Activated B cell treated with CpG ODN at 0.5 μM for 24 hours (primary cell): ENCODE measurements at regions of chr6 and their contacts with region 1.

Region 1: DNA sequence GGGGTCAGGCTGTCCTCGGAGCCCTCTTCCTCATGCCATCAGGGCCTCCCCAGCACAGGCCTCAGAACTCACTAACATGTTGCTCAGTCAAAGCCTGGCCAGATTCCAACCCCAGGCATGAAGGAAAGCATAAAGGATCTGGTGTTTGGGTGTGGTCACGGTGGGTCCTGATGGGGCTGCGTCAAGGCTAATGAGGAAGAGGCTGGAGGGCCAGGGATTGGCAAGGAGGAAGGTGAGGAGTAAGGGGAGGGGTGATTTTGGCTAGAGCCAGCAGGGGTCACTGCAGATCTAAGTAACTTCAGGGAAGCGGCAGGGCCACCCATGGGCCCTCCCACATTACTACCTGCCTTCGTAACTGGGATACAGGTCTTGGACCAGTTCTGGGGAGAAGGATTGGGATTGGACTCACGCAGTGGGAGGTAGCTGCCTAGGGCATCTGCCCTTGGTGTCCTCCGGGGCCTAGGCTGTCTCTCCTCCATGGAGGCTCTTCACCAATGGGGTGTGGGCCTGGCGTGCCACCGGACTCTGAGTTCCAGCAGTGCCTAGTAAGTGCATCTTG is 36.2 kb upstream of the MRPS18A start:
- DNase-seq: peak; percentile 46
- ATAC-seq: peak; percentile 74
- H3K4me3 Mint-ChIP-seq: no peak overlapping the region
- H3K27ac Mint-ChIP-seq: no peak overlapping the region
- H3K4me1 Mint-ChIP-seq: peaks cover 27% of the 10 kb centered on the region
- H3K27me3 Mint-ChIP-seq: peaks cover 5% of the 10 kb centered on the region
- CTCF ChIP-seq: peak; percentile 36

Region 2: DNA sequence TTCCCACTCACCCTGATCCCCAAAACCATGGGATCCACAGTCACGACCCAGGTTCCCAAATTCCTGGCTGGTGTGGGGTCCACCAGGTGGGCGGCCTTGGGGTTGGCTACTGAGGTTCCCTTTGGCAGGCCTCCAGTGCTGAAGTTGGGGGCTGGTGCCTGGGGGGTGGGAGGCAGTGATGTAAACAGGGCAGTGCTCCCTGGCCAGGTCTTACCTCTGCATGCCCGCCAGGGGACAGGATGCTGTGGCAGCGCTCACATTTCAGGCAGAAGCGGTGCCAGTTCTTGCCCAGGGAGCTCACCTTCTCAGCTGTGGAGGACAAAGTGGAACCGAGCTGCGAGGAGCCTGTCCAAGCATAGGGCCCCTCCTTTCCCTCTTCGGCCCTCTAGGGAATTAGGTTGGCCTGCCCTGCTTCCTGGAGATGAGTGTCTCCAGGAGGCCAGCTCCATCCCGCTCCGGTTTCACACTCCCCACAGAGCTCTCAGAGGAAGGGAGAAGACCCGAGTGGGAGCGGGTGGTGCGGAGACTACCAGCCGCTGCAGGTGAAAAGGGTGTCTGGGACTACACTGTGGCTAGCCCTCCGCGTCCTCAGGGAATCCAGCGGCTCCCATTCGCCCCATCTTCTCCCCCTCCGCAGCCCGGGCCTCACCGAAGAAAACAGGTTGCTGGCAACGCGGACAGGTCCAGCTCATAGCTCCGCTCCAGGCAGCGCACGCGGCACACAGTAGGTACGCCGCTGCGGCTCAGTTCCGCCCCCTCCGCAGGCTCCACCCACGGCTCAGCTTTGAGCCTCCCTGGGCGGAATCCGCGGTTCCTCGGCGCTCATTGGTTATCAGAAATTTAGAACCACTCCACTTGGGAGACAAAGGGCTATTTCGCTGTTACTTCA is 415.5 kb before region 1 on chr6 and contains the start of gene CRIP3:
- CTCF ChIA-PET with region 1: no interaction called
- POLR2A ChIA-PET with region 1: no interaction called
- intact Hi-C with region 1: no loop called
- DNase-seq: peak; percentile 58
- ATAC-seq: peak; percentile 75
- H3K4me3 Mint-ChIP-seq: peak within 1 kb of the TSS; percentile 90
- H3K27ac Mint-ChIP-seq: peak within 1 kb of the TSS; percentile 69
- H3K4me1 Mint-ChIP-seq: peaks cover 53% of the 10 kb centered on the region
- H3K27me3 Mint-ChIP-seq: no peaks in the 10 kb centered on the region
- CTCF ChIP-seq: no peak
- total RNA-seq, gene CRIP3: 42.2 and 49.9 TPM in 2 replicates

Region 3: GRCh38 chr6:43702534-43703440 is 21.0 kb before region 1 on chr6:
- CTCF ChIA-PET with region 1: interaction called, 6 read pairs
- POLR2A ChIA-PET with region 1: interaction called, 6 read pairs
- intact Hi-C with region 1: loop called (anchors 1 kb)
- DNase-seq: peak; percentile 50
- ATAC-seq: peak; percentile 80
- H3K4me3 Mint-ChIP-seq: no peak overlapping the region
- H3K27ac Mint-ChIP-seq: peak overlapping the region; percentile 26
- H3K4me1 Mint-ChIP-seq: peaks cover 51% of the 10 kb centered on the region
- H3K27me3 Mint-ChIP-seq: peaks cover 4% of the 10 kb centered on the region
- CTCF ChIP-seq: no peak

Region 4: DNA sequence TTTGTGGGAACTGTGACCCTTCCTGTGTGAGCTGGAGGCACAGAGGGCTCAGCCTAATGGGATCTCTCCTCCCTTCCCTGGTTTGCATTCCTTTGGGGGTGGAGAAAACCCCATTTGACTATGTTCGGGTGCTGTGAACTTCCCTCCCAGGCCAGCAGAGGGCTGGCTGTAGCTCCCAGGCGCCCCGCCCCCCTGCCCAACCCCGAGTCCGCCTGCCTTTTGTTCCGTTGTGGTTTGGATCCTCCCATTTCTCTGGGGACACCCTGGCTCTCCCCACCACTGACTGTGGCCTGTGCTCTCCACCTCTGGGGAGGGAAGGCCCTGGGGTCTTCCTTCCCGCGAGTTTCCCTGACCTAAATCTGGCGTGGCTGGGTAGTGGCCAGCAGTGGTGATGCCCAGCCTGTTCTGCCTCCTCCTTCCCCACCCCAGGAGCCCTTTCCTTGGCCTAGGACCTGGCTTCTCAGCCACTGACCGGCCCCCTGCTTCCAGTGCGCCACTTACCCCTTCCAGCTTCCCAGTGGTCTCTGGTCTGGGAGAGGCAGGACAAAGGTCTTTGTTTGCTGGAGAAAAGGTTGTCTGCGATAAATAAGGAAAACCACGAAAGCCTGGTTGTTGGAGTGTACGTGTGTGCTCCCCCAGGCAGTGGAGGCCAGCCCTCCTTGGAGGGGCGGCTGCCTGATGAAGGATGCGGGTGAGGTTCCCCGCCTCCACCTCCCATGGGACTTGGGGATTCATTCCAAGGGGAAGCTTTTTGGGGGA is 51.1 kb after region 1 on chr6:
- CTCF ChIA-PET with region 1: interaction called, 15 read pairs
- POLR2A ChIA-PET with region 1: interaction called, 24 read pairs
- intact Hi-C with region 1: loop called (anchors 1 kb)
- DNase-seq: peak; percentile 40
- ATAC-seq: no peak
- H3K4me3 Mint-ChIP-seq: peak overlapping the region; percentile 7
- H3K27ac Mint-ChIP-seq: no peak overlapping the region
- H3K4me1 Mint-ChIP-seq: peaks cover 40% of the 10 kb centered on the region
- H3K27me3 Mint-ChIP-seq: peaks cover 14% of the 10 kb centered on the region
- CTCF ChIP-seq: peak; percentile 54

Region 5: DNA sequence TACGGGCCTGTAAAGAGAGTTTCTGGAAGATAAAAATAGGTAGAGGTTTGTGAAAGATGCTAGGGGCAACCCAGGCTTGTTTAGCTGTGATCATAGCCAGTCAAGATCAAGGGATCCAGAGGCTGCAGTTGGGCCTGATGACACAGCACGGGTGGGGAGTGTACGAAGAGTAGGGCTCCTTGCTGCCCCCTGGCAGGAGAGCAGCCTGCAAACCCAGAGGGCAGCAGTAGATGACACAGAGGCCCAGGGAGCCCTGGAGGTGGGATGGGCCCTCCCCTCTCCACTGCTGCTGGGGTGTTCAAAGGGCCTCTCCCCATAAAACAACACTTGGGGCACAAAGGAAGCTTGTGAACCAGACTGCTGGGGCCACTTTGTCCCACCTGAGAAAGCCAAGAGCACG is 93.4 kb after region 1 on chr6:
- CTCF ChIA-PET with region 1: interaction called, 5 read pairs
- POLR2A ChIA-PET with region 1: no interaction called
- intact Hi-C with region 1: loop called (anchors 1 kb)
- DNase-seq: no peak
- ATAC-seq: peak; percentile 71
- H3K4me3 Mint-ChIP-seq: no peak overlapping the region
- H3K27ac Mint-ChIP-seq: no peak overlapping the region
- H3K4me1 Mint-ChIP-seq: no peaks in the 10 kb centered on the region
- H3K27me3 Mint-ChIP-seq: peaks cover 19% of the 10 kb centered on the region
- CTCF ChIP-seq: no peak

Region 6: DNA sequence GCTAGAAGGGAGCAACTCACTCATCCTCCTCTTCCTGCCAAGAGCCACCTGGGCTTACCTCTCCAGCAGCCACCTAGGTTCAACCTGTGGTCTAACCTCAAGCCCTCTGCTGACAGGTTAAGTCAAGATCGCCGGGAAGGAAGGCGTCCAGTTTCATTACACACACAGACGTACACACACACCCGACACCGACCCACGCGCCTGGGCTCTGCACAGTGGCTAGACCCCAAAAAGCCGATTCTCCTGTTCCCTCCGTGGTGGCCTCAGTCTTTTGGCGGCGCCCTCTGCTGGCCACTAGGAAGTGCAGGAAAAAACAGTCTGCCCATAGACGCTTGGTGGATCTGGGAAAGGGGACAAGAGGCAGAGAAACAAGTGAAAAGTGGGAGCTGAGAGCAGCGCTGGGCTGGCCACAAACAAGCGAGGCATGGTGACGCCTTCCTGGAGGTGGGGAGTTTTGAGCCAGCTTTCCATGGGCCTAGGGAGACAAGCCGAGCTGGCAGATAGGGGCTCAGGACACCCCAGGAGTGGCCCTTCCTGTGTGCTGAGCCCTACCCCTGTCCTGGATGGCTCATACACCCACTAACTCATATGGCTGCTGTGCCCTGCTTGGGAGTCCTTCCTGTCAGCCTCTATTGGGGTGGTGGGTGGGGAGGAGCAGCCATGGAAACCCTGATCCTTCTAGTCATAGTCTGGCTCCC is 350.8 kb after region 1 on chr6:
- CTCF ChIA-PET with region 1: interaction called, 27 read pairs
- POLR2A ChIA-PET with region 1: no interaction called
- intact Hi-C with region 1: loop called (anchors 1 kb)
- DNase-seq: peak; percentile 56
- ATAC-seq: peak; percentile 60
- H3K4me3 Mint-ChIP-seq: peak overlapping the region; percentile 66
- H3K27ac Mint-ChIP-seq: peak overlapping the region; percentile 7
- H3K4me1 Mint-ChIP-seq: peaks cover 20% of the 10 kb centered on the region
- H3K27me3 Mint-ChIP-seq: peaks cover 30% of the 10 kb centered on the region
- CTCF ChIP-seq: peak; percentile 21

Region 7: DNA sequence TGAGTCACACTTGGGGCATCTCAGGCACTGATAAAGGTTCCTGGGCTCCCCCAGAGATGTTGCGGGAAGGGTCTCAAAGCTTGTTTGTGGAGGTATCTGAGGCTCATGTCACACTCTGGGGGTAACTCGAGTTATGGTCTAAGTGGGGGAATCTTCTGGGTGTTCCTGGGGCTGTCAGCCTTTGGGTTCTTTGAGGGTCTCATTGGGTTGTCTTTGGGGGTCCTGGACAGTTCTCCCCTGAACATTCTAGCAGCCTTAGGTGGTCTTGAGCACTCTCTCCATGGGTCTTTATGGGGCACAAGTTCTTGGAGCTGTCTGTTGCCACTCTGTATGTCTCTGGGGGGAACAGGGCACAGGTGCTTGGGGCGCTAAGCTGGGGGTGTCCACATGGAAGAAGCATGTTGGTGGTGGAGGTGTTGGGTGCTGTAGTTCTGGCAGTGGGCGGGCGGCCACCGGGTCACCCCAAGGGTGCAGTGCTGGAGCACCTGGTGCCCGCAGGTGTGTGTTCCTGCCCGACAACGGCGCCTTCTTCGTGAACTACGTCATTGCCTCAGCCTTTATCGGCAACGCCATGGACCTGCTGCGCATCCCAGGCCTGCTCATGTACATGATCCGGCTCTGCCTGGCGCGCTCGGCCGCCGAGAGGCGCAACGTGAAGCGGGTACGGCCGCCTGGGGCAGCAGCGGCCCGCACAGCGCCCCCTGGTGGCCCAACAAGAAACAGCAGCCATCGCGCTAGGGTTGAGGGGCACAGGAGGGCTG is 427.7 kb after region 1 on chr6:
- CTCF ChIA-PET with region 1: no interaction called
- POLR2A ChIA-PET with region 1: no interaction called
- intact Hi-C with region 1: loop called (anchors 10 kb)
- DNase-seq: peak; percentile 78
- ATAC-seq: peak; percentile 92
- H3K4me3 Mint-ChIP-seq: no peak overlapping the region
- H3K27ac Mint-ChIP-seq: no peak overlapping the region
- H3K4me1 Mint-ChIP-seq: peaks cover 5% of the 10 kb centered on the region
- H3K27me3 Mint-ChIP-seq: no peaks in the 10 kb centered on the region
- CTCF ChIP-seq: peak; percentile 87